GM13977 (cell line): ENCODE measurements at regions of chr11 and their contacts with region 1.

Region 1: GRCh38 chr11:68251765-68252164 is 20.0 kb downstream of the C11orf24 start:
- DNase-seq: no peak
- CTCF ChIP-seq: no peak

Region 2: GRCh38 chr11:68297812-68298658 is 46.3 kb after region 1 on chr11:
- in situ Hi-C with region 1: loop called (anchors 5 kb)
- DNase-seq: peak; percentile 87
- CTCF ChIP-seq: peak; percentile 98